Prostate gland (tissue), 2 donors: ENCODE measurements at regions of chr12 and their contacts with region 1.

Region 1: GRCh38 chr12:94074980-94075928 is 73.1 kb upstream of the PLXNC1 start:
- DNase-seq: peak; percentile 49
- H3K4me3 ChIP-seq: no peak overlapping the region
- H3K27ac ChIP-seq: peak overlapping the region; percentile 11 to 45
- H3K4me1 ChIP-seq: no peaks in the 10 kb centered on the region
- H3K27me3 ChIP-seq: no peaks in the 10 kb centered on the region
- CTCF ChIP-seq: peak in 3 of 4 experiments; percentile 46 to 57 (median 57)
- POLR2A ChIP-seq: no peak

Region 2: GRCh38 chr12:93638095-93638494 is 437.2 kb before region 1 on chr12:
- intact Hi-C with region 1: no loop called
- DNase-seq: no peak
- H3K4me3 ChIP-seq: no peak overlapping the region
- H3K27ac ChIP-seq: no peak overlapping the region
- H3K4me1 ChIP-seq: no peaks in the 10 kb centered on the region
- H3K27me3 ChIP-seq: no peaks in the 10 kb centered on the region
- CTCF ChIP-seq: no peak
- POLR2A ChIP-seq: no peak

Region 3: GRCh38 chr12:93979189-93979588 is 96.1 kb before region 1 on chr12:
- intact Hi-C with region 1: loop called (anchors 10 kb)
- DNase-seq: peak; percentile 29
- H3K4me3 ChIP-seq: no peak overlapping the region
- H3K27ac ChIP-seq: no peak overlapping the region
- H3K4me1 ChIP-seq: no peaks in the 10 kb centered on the region
- H3K27me3 ChIP-seq: no peaks in the 10 kb centered on the region
- CTCF ChIP-seq: peak in 3 of 4 experiments; percentile 46 to 74 (median 48)
- POLR2A ChIP-seq: no peak